ENCODE measurements at regions of chr3 and their contacts with region 1.

Region 1: GRCh38 chr3:79032686-79033318 is 735.0 kb downstream of the ROBO1 start:
- DNase-seq: no peak
- ATAC-seq: peak in 1 of 2 donors; percentile 41

Region 2: DNA sequence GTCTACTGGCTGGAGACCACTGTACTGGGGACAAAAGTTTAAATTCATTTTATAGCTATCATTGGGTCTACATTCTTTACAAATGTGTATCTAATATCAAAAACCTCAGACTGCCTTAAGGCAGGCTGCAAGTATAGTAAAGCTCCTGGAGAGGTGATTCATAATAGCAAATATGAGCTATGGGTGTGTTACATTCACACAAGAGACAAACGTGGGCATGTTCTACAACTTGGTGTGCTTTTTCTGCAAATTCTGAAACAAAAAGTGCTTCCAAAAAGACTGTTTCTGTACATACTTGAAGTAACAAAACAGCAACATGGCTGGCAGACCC is 366.4 kb before region 1 on chr3:
- intact Hi-C with region 1: loop called in 1 of 2 experiments (anchors 10 kb)
- DNase-seq: no peak
- ATAC-seq: no peak

Measured in left cardiac atrium (tissue), 4 donors.